AG04449 (cell line): ENCODE measurements at regions of chr12 and their contacts with region 1.

Region 1: DNA sequence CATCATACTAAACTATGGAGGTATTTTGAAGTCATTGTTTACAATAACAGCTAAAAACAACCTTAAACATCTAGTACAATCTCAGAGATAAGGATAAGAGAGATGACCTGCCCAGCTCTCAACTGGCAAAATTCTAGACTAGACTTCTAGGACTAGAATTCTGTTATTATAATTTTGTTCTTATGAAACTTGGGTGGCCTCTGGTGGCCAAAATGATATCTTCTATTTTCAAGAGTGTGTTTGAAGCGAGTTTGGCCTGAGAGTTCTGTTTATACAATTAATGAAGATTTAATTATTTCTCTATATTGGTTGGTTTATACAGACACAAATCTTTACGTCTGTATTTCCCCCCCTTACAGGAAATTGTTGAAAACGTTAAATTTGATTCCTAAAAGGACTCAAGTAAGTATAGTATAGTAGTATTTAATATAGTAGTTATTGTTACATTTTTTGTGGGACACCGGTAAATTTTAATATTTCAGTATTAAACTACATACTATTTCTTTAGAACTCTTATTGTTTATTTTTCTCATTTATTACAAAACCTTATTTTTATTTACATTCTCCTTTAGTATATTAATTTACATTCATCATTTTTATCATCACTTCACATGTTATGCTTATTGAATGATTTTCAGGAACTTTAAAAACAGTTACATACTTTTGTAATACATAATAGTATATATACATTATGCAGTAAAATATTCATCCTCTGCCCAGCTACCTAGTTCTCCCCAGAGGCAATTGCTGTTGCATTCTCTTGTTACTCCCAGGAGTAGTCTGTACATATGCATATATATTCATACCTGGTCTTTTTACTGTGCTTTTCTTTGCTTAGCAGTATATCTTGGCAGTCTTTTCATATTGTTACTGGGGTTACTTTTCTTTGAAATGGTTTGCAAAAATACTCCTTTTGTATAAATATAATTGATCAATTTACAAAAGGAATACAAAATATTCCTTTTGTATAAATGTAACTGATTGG is 6.6 kb downstream of the PPHLN1 start:
- DNase-seq: no peak
- H3K4me3 ChIP-seq: no peak overlapping the region
- CTCF ChIP-seq: peak; percentile 30

Region 2: DNA sequence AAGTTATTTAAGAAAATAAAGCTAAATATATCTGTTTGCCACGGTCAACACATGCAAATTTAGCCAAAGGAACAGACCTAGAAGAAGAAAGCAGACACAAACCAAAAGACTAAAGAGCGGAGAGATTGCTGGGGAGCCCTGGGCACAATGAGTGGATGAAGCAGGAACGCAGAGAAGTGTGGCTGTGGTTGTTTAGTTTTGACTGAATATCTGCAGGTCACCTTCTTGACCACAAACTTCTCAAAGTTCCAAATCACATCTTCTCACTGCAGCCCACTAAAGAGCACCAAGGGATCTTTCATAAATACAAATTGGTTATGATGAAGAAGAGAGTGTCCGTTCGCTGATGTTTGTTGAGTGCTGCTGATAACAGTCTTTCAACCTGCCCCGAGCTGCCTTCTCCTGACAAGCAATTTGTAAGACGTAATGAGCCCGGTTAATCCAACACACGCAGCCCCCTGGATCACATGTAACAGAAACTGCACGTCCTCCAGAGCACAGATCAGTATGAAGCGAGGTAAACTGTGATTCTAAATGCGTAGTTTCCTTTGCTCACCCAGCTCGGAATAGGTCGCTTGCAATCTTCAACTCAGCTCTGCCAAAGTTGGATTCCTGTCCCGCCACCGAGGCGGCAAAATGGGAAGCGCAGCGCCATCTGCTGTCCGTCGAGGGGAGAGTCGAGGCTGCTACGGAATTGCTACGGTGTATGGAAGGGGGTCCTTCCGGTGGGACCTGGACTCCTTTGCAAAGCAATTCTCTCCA is 308.7 kb before region 1 on chr12:
- CTCF ChIA-PET with region 1: interaction called, 19 read pairs
- POLR2A ChIA-PET with region 1: no interaction called
- DNase-seq: no peak
- H3K4me3 ChIP-seq: peak overlapping the region; percentile 52
- CTCF ChIP-seq: peak; percentile 99

Region 3: DNA sequence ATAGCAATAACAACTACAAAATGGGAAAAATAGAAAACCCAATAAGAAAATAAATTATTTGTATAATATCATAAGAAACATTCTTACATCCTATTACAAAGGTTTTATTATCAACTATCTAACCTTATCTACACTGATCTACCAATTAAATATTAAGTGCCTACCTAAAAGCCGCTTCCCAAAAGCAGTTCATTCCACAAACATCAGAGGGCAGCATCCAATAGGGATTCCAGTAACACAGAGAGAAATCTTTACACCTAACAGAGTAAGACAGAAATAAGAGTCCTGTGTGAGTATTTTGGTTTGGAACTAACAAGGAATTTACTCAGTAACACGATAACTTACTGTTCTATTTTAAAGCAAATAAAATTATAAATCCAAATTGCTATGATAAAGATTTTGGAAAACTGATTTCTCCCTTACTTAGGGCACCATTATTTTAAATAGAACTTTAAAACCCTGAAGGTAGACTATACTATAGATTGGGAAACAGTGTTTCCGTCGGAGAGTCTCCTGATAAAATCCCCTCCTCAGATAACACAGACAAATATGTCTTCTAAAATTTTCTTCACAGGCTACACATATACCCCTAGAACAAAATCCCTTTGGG is 202.9 kb before region 1 on chr12:
- CTCF ChIA-PET with region 1: interaction called, 38 read pairs
- POLR2A ChIA-PET with region 1: no interaction called
- DNase-seq: no peak
- H3K4me3 ChIP-seq: no peak overlapping the region
- CTCF ChIP-seq: peak; percentile 63

Region 4: DNA sequence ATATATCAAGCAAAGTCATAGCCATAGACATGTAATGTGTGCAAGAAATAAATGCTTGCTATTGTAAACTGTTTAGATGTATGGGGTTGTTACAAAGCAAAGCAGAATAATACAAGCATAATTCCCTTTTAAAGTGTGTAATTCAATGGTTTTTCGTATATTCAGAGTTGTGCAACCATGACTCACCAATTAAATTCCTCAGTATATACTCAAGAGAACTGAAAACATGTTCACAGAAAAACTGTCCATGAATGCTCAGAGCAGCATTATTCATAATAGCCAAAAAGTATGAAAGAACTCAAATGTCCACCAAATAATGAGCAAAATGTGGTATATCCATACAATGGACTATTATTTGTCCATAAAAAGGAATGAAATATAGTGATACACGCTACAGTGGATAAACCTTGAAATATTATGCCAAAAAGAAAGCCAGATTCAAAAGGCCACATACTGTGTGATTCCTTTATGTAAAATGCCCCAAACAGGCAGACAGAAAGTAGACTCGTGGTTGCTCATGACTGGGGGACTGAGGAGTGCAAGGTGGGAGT is 197.3 kb before region 1 on chr12:
- CTCF ChIA-PET with region 1: interaction called, 25 read pairs
- POLR2A ChIA-PET with region 1: no interaction called
- DNase-seq: no peak
- H3K4me3 ChIP-seq: no peak overlapping the region
- CTCF ChIP-seq: no peak

Region 5: DNA sequence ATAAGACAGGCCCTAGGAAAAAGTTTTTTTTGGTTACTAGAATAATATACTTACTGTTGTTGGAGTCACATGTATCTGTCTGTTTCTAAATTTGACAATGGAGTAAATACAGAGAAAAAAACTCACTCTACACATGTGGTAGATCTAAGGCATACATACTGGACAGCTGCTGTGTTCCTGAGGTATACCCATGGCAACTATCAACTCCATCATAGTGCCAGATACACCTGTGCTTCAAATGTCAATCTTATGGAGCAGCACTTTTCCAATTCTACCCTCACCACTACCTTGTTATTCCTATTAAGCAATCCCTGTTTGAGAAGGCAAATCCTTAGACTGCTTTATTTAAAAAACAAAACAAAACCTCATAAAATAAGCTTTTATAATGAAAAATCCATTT is 10.0 kb before region 1 on chr12:
- CTCF ChIA-PET with region 1: interaction called, 11 read pairs
- POLR2A ChIA-PET with region 1: interaction called, 3 read pairs
- DNase-seq: no peak
- H3K4me3 ChIP-seq: no peak overlapping the region
- CTCF ChIP-seq: no peak

Region 6: GRCh38 chr12:42346403-42347002 is 13.9 kb after region 1 on chr12:
- CTCF ChIA-PET with region 1: interaction called, 12 read pairs
- POLR2A ChIA-PET with region 1: no interaction called
- DNase-seq: no peak
- H3K4me3 ChIP-seq: no peak overlapping the region
- CTCF ChIP-seq: no peak

Region 7: DNA sequence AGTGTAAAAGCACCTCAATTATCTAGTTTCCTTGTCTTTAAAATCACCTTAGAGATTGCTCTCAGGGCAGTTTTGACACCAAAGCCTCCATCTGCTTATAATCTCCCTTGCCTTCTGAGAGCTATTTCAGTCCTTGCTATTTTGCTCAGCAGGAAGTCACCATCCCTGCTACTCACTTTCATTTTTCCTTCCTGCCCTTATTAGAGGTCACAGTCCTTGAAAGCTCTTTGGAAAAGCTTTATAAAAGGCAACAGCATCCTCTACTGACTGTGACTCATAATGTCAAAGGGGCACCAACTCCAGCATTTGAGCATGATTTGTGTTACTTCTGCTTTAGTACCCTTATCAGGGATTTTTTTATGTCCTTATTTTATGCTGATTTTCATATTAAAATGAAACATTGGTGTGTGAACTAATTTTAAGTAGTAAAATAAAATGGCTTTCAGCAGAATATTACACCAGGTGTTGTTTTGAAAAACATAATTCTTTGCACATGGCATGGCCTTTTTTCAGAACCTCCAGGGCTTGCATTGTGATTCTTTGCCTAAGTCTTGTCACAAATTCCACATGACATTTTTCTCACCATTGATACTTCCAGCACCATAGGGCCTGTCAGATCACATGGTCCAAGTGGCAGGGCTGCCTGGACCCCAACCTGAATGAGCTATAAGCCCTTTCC is 1006.4 kb after region 1 on chr12:
- CTCF ChIA-PET with region 1: interaction called, 10 read pairs
- POLR2A ChIA-PET with region 1: no interaction called
- DNase-seq: no peak
- H3K4me3 ChIP-seq: no peak overlapping the region
- CTCF ChIP-seq: peak; percentile 57